WTC11 (cell line): ENCODE measurements at regions of chr10 and their contacts with region 1.

Region 1: DNA sequence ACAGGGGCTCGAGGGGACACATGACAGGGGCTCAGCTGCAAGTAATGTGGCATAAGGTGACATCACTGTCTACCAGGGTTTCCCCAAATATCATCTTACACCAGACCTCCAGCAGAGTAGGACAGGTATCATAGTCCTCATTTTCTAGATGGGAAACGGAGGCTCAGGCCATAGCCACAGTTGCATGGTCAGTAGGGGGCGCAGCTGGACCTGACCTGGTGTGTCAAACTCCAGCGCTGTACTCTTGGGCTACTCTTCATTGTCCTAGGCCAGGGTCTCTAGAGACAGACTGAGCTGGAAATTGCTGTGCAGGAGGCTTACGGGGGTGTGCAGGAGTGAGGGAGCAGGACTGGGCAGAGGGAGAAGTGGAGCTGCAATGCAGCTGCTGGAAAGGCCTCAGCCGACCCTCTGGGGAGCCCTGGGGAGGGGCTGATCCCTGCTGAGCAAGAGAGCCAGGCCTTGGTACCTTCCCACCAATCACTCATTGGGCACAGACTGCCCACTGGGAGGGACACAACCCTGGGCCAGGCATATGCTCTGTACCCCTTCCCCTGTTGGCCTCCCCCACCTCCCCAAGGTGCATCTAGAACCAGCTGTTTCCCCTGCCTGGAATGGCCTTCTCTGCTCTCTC is 89.9 kb downstream of the CDH23 start:
- DNase-seq: peak; percentile 90
- ATAC-seq: peak; percentile 93
- H3K4me3 Mint-ChIP-seq: no peak overlapping the region
- H3K27ac Mint-ChIP-seq: no peak overlapping the region
- H3K4me1 Mint-ChIP-seq: peaks cover 3% of the 10 kb centered on the region; the same call in 1 of the 2 replicates
- H3K27me3 Mint-ChIP-seq: peaks cover 11% of the 10 kb centered on the region
- CTCF ChIP-seq: peak; percentile 82

Region 2: GRCh38 chr10:71396084-71396720 is 90.4 kb before region 1 on chr10:
- CTCF ChIA-PET with region 1: interaction called, 17 read pairs
- POLR2A ChIA-PET with region 1: no interaction called
- DNase-seq: peak; percentile 76
- ATAC-seq: peak; percentile 86
- H3K4me3 Mint-ChIP-seq: peak overlapping the region; percentile 63
- H3K27ac Mint-ChIP-seq: no peak overlapping the region
- H3K4me1 Mint-ChIP-seq: peaks cover 20% of the 10 kb centered on the region
- H3K27me3 Mint-ChIP-seq: peaks cover 59% of the 10 kb centered on the region
- CTCF ChIP-seq: no peak

Region 3: GRCh38 chr10:71475243-71475871 is 11.2 kb before region 1 on chr10:
- CTCF ChIA-PET with region 1: interaction called, 10 read pairs
- POLR2A ChIA-PET with region 1: no interaction called
- DNase-seq: peak; percentile 50
- ATAC-seq: peak; percentile 92
- H3K4me3 Mint-ChIP-seq: no peak overlapping the region
- H3K27ac Mint-ChIP-seq: 0 out of 2 replicates have a peak overlapping the region, but pooled peaks have one; percentile 20
- H3K4me1 Mint-ChIP-seq: peaks cover 10% of the 10 kb centered on the region
- H3K27me3 Mint-ChIP-seq: no peaks in the 10 kb centered on the region
- CTCF ChIP-seq: no peak

Region 4: GRCh38 chr10:71522442-71523144 is 36.0 kb after region 1 on chr10:
- CTCF ChIA-PET with region 1: interaction called, 10 read pairs
- POLR2A ChIA-PET with region 1: no interaction called
- DNase-seq: no peak
- ATAC-seq: peak; percentile 71
- H3K4me3 Mint-ChIP-seq: no peak overlapping the region
- H3K27ac Mint-ChIP-seq: no peak overlapping the region
- H3K4me1 Mint-ChIP-seq: peaks cover 6% of the 10 kb centered on the region; the same call in 1 of the 2 replicates
- H3K27me3 Mint-ChIP-seq: no peaks in the 10 kb centered on the region
- CTCF ChIP-seq: no peak

Region 5: DNA sequence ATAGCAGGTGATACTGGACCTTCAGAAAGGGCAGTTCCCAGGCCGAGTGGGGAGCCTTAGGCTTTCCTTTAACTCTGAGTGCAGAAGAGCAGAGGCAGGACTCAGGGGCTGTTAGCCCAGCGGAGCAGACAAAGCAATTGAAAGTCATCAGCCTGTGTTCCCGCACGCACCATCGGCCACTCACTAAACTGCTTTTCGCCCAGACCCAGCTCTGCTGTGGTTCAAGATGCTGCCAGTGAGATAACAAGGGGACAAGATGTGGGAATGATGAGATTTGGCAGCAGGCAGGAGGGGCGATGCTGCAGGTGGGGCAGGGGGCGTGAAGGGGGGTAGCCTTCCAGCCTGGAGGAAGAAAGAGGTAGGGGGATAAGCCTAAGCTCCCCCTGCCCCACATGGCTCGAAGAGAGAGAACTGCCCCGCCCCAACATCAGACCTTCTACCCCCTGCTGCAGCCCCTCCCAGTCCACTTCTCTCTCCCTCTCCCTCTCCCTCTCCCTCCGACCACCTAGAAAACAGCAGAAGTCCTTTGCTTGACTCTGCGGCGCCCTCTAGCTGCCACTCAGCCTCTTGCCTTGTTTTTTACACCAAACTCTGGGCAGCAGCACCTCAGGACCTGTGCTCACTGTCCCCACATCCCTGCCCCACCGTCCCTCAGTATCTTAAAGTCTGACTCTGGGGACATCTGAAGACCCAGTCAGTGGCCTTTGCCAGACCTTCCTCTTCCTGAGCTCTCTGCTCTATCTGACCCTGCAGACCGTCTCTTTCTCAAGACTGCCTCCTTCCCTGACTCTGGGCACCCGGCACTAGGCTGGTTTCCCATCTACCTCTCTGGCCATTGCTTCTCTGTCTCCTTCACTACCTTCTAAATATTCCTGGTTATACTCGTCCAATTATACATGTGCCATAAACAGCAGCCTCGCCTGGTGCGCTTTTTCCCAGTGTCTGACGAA is 122.5 kb after region 1 on chr10:
- CTCF ChIA-PET with region 1: interaction called, 11 read pairs
- POLR2A ChIA-PET with region 1: no interaction called
- DNase-seq: peak; percentile 93
- ATAC-seq: peak; percentile 75
- H3K4me3 Mint-ChIP-seq: no peak overlapping the region
- H3K27ac Mint-ChIP-seq: no peak overlapping the region
- H3K4me1 Mint-ChIP-seq: peaks cover 53% of the 10 kb centered on the region
- H3K27me3 Mint-ChIP-seq: no peaks in the 10 kb centered on the region
- CTCF ChIP-seq: peak; percentile 67

Region 6: DNA sequence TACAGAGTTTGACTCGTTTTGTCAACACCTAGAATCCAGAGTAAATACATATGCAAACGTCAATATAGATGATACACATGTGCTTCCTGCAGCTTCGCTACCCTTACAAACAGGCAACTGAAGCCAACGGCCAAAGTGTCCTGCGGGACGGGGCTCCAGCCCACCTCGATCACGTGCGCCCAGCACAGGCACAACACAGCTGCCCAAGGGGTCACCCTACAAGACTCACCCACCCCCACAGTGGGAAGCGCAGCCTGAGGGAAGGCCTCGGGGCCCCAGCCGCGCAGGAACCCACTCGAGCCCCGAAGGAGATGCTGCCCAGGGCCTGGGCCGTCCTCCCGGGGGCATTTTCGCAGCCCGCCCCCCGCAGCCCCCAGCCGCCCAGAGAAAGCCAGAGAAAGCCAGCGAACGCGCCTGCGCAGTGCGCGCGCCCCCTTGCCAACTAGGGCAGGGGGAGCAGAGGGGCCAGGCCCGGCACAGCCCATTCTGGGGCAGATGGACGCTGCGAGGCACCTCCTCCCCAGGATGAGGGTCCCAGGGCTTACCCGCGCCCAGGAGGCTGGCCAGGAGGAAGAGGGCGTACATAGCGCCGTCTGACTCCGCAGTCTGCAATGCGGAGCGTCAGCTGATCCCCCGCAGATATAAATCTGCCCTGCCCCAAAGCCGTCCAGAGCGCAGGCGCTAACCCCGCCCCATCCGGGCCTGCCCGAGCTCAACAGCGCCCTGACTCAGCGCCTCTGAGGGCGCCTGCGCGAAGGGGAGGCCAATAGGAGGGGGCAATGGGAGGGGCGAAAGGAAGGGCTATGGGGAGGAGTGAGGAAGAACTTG is 364.3 kb after region 1 on chr10 and contains the start of gene PSAP:
- CTCF ChIA-PET with region 1: no interaction called
- POLR2A ChIA-PET with region 1: no interaction called
- DNase-seq: peak; percentile 98
- ATAC-seq: peak; percentile 97
- H3K4me3 Mint-ChIP-seq: peak within 1 kb of the TSS; percentile 96
- H3K27ac Mint-ChIP-seq: peak within 1 kb of the TSS; percentile 94
- H3K4me1 Mint-ChIP-seq: peaks cover 40% of the 10 kb centered on the region
- H3K27me3 Mint-ChIP-seq: no peaks in the 10 kb centered on the region
- CTCF ChIP-seq: no peak
- total RNA-seq, gene PSAP: 397 to 474 TPM (median 462 TPM) in 3 replicates